Activated CD4-positive, alpha-beta memory T cell treated with anti-CD3 and anti-CD28 coated beads, Interleukin-2, amount 10 ng/mL, durations not matched to agents 7 days and 5 days (primary cell): ENCODE measurements at regions of chr15 and their contacts with region 1.

Region 1: GRCh38 chr15:45457641-45458433 is 64.7 kb downstream of the SLC30A4 start:
- DNase-seq: peak; percentile 78
- H3K4me3 Mint-ChIP-seq: peak overlapping the region; percentile 75
- H3K27ac Mint-ChIP-seq: peak overlapping the region; percentile 72
- H3K4me1 Mint-ChIP-seq: peaks cover 50% of the 10 kb centered on the region
- H3K27me3 Mint-ChIP-seq: peaks cover 2% of the 10 kb centered on the region

Region 2: GRCh38 chr15:45414215-45414885 is 43.5 kb before region 1 on chr15:
- CTCF ChIA-PET with region 1: interaction called, 23 read pairs
- POLR2A ChIA-PET with region 1: no interaction called
- DNase-seq: no peak
- H3K4me3 Mint-ChIP-seq: no peak overlapping the region
- H3K27ac Mint-ChIP-seq: peak overlapping the region; percentile 37
- H3K4me1 Mint-ChIP-seq: peaks cover 20% of the 10 kb centered on the region
- H3K27me3 Mint-ChIP-seq: no peaks in the 10 kb centered on the region

Region 3: GRCh38 chr15:45429974-45430792 is 27.7 kb before region 1 on chr15:
- CTCF ChIA-PET with region 1: interaction called, 92 read pairs
- POLR2A ChIA-PET with region 1: interaction called, 9 read pairs
- DNase-seq: peak; percentile 86
- H3K4me3 Mint-ChIP-seq: peak overlapping the region; percentile 41
- H3K27ac Mint-ChIP-seq: no peak overlapping the region
- H3K4me1 Mint-ChIP-seq: peaks cover 7% of the 10 kb centered on the region
- H3K27me3 Mint-ChIP-seq: peaks cover 31% of the 10 kb centered on the region

Region 4: DNA sequence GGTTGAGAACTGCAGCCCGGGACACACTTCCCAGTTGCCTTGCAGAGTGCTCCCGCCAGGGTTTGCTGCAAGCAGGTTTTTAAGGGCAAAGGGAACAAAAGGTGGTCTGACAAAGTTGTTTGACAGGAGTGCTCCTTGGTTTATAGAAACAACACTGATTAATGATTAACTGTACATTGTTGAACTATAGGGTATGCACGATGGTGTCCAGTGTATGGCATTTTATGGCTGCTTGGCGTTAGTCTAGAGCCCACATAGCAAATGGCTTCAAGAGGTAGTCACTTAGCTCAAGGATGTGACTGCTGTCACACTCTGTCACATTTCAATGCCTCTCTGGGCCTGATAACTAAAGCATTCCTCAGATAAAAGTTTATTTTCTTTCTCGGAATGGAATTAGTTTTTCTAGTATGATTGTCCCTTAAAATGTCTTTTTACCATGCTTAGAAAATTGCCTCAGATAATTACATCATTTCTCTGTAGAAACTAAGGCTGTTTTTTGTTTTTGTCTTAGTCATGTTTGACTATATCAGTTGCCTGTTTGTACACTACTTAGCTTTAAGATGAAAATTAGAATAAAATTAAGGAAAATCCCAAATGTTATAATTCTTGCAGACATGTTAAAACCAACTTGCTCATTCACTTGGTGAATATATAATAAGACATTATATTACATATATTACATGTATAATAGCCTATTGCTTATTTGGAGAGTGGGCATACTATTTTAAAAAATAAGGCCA is 18.1 kb before region 1 on chr15:
- CTCF ChIA-PET with region 1: interaction called, 10 read pairs
- POLR2A ChIA-PET with region 1: interaction called, 3 read pairs
- DNase-seq: no peak
- H3K4me3 Mint-ChIP-seq: no peak overlapping the region
- H3K27ac Mint-ChIP-seq: no peak overlapping the region
- H3K4me1 Mint-ChIP-seq: no peaks in the 10 kb centered on the region
- H3K27me3 Mint-ChIP-seq: peaks cover 8% of the 10 kb centered on the region

Region 5: GRCh38 chr15:45587095-45587860 is 129.4 kb after region 1 on chr15 and contains the start of gene BLOC1S6:
- CTCF ChIA-PET with region 1: interaction called, 30 read pairs
- POLR2A ChIA-PET with region 1: interaction called, 8 read pairs
- DNase-seq: peak; percentile 89
- H3K4me3 Mint-ChIP-seq: peak within 1 kb of the TSS; percentile 97
- H3K27ac Mint-ChIP-seq: peak within 1 kb of the TSS; percentile 97
- H3K4me1 Mint-ChIP-seq: peaks cover 38% of the 10 kb centered on the region
- H3K27me3 Mint-ChIP-seq: no peaks in the 10 kb centered on the region
- total RNA-seq, gene BLOC1S6: 39.3 to 43.1 TPM

Region 6: DNA sequence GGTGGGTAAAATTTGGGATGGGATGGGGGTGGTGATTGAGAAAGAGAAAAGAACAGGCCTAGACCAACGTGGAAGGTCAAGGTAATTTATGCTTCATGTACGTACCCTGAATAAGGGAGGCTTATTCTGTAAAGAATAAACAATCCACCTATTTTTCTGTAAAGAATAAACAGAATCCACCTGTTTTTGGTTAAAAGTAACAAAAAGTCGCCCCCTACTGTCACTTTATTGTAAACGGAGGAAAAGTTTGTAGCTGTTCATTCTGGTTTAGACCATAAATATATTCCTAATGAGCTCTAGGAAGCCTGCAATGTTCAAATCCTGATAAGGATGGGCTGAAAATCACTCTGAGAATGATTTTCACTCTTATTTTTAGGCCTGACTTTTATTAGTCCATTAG is 153.5 kb after region 1 on chr15:
- CTCF ChIA-PET with region 1: interaction called, 75 read pairs
- POLR2A ChIA-PET with region 1: interaction called, 3 read pairs
- DNase-seq: no peak
- H3K4me3 Mint-ChIP-seq: no peak overlapping the region
- H3K27ac Mint-ChIP-seq: no peak overlapping the region
- H3K4me1 Mint-ChIP-seq: peaks cover 19% of the 10 kb centered on the region
- H3K27me3 Mint-ChIP-seq: no peaks in the 10 kb centered on the region